Right cardiac atrium (tissue), 5 donors: ENCODE measurements at regions of chr4 and their contacts with region 1.

Region 1: GRCh38 chr4:150647008-150647407 is 65.1 kb downstream of the MAB21L2 start:
- DNase-seq: no peak
- ATAC-seq: no peak
- H3K4me3 ChIP-seq: no peak overlapping the region
- H3K27ac ChIP-seq: no peak overlapping the region
- H3K4me1 ChIP-seq: no peaks in the 10 kb centered on the region
- H3K27me3 ChIP-seq: no peaks in the 10 kb centered on the region

Region 2: GRCh38 chr4:150479657-150480056 is 167.4 kb before region 1 on chr4:
- intact Hi-C with region 1: no loop called
- DNase-seq: no peak
- ATAC-seq: peak in 1 of 2 donors; percentile 58
- H3K4me3 ChIP-seq: no peak overlapping the region
- H3K27ac ChIP-seq: no peak overlapping the region
- H3K4me1 ChIP-seq: no peaks in the 10 kb centered on the region
- H3K27me3 ChIP-seq: no peaks in the 10 kb centered on the region

Region 3: GRCh38 chr4:150543042-150543441 is 104.0 kb before region 1 on chr4:
- intact Hi-C with region 1: no loop called
- DNase-seq: no peak
- ATAC-seq: no peak
- H3K4me3 ChIP-seq: no peak overlapping the region
- H3K27ac ChIP-seq: no peak overlapping the region
- H3K4me1 ChIP-seq: no peaks in the 10 kb centered on the region
- H3K27me3 ChIP-seq: no peaks in the 10 kb centered on the region

Region 4: GRCh38 chr4:150739591-150739990 is 92.6 kb after region 1 on chr4:
- intact Hi-C with region 1: loop called in 1 of 4 experiments (anchors 10 kb)
- DNase-seq: no peak
- ATAC-seq: peak in 1 of 2 donors; percentile 71
- H3K4me3 ChIP-seq: no peak overlapping the region
- H3K27ac ChIP-seq: no peak overlapping the region
- H3K4me1 ChIP-seq: no peaks in the 10 kb centered on the region
- H3K27me3 ChIP-seq: no peaks in the 10 kb centered on the region

Region 5: GRCh38 chr4:150782311-150782710 is 135.3 kb after region 1 on chr4:
- intact Hi-C with region 1: no loop called
- DNase-seq: peak in 1 of 3 donors; percentile 13
- ATAC-seq: peak; percentile 51 to 54
- H3K4me3 ChIP-seq: no peak overlapping the region
- H3K27ac ChIP-seq: no peak overlapping the region
- H3K4me1 ChIP-seq: no peaks in the 10 kb centered on the region
- H3K27me3 ChIP-seq: no peaks in the 10 kb centered on the region

Region 6: GRCh38 chr4:151824656-151825055 is 1177.6 kb after region 1 on chr4:
- intact Hi-C with region 1: no loop called
- DNase-seq: no peak
- ATAC-seq: no peak
- H3K4me3 ChIP-seq: no peak overlapping the region
- H3K27ac ChIP-seq: no peak overlapping the region
- H3K4me1 ChIP-seq: no peaks in the 10 kb centered on the region
- H3K27me3 ChIP-seq: no peaks in the 10 kb centered on the region